ENCODE measurements at regions of chr2 and their contacts with region 1.

Region 1: GRCh38 chr2:187869195-187869594 is 315.0 kb upstream of the TFPI start:
- DNase-seq: no peak
- H3K4me3 ChIP-seq: no peak overlapping the region
- H3K27ac ChIP-seq: no peak overlapping the region
- H3K4me1 ChIP-seq: no peaks in the 10 kb centered on the region
- H3K27me3 ChIP-seq: no peaks in the 10 kb centered on the region
- CTCF ChIP-seq: no peak

Region 2: GRCh38 chr2:187567126-187567525 is 302.1 kb before region 1 on chr2:
- CTCF ChIA-PET with region 1: no interaction called
- POLR2A ChIA-PET with region 1: interaction called, 18 read pairs
- intact Hi-C with region 1: no loop called
- DNase-seq: no peak
- H3K4me3 ChIP-seq: no peak overlapping the region
- H3K27ac ChIP-seq: no peak overlapping the region
- H3K4me1 ChIP-seq: no peaks in the 10 kb centered on the region
- H3K27me3 ChIP-seq: no peaks in the 10 kb centered on the region
- CTCF ChIP-seq: no peak

Region 3: DNA sequence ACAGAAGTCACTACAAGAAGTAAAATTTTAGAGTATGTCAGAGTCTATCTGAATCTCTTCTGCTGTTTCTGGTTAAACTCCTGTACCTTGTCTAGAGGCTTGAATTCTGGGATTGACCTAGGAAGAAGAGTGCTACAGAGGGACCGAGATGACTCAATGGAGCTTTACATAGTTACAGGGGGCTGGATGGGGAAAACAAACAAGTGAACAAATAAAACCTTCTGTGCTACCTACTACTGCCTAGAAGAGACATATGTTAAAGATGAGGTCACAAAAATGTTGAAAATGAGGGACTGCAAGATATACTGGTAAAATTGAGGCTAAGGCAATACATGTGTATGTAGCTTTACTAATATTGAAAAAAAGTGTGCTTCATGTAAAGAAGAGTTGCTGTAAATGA is 49.6 kb before region 1 on chr2:
- CTCF ChIA-PET with region 1: no interaction called
- POLR2A ChIA-PET with region 1: no interaction called
- intact Hi-C with region 1: no loop called
- DNase-seq: no peak
- H3K4me3 ChIP-seq: no peak overlapping the region
- H3K27ac ChIP-seq: no peak overlapping the region
- H3K4me1 ChIP-seq: no peaks in the 10 kb centered on the region
- H3K27me3 ChIP-seq: no peaks in the 10 kb centered on the region
- CTCF ChIP-seq: no peak